Sciatic nerve (tissue), 2 donors: ENCODE measurements at regions of chr3 and their contacts with region 1.

Region 1: DNA sequence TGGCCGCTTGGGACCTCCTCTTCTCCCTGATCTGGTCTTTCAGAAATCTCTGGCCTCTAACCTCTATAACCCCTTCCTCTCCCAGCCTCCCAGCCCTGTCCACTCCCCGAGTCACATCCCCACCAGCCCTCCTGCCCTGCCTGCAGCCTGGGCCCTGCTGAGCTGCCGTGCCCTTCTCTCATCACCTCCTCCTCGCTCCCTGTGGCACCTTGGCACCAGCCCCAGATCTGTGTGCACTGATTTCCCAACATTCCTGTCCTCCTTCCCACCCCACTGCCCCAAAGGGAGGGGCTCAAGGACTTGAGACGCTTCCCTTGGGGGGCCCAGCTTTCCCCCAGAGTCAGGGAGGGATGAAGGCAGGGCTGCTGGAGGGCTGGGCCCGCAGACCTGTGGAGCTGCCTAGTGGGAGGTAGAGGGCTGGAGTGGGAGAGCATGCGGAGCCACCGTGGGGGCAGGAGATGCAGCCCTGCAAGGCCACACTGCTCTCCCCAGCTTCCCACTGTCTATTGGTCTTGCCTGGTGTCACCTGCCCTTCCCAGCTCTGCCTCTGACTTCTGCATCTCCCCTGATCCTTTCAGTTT is 42.7 kb downstream of the EXOG start:
- DNase-seq: no peak
- ATAC-seq: no peak

Region 2: DNA sequence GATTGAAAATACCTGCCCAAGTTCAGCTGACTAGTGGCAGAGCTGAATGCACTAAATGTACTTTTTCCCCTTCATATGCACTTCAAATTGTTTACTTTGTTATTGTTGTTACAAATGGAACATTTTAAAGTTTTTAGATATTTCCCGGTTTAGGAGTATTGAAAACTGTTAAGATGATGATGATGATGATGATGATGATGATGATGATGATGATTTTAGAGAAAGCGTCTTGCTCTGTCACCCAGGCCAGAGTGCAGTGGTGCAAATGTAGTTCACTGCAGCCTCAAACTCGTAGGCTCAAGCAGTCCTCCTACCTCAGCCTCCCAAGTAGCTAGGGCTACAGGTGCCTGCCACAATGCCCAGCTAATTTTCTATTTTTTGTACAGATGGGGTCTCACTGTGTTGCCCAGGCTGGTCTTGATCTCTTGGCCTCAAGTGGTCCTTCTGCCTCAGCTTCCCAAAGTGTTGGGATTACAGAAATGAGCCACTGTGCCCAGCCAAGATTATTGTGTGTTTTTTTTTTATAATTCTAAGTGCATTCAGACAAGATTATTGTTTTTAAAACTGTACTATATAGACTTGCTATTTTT is 319.2 kb before region 1 on chr3:
- intact Hi-C with region 1: loop called (anchors 2 kb)
- DNase-seq: no peak
- ATAC-seq: no peak

Region 3: GRCh38 chr3:40267937-40268723 is 1729.3 kb after region 1 on chr3:
- intact Hi-C with region 1: loop called (anchors 5 kb)
- DNase-seq: no peak
- ATAC-seq: no peak